Ovary (tissue), 10 donors: ENCODE measurements at regions of chrX and their contacts with region 1.

Region 1: GRCh38 chrX:24332878-24333277 is 19.0 kb upstream of the SUPT20HL2 start:
- DNase-seq: no peak
- H3K4me3 ChIP-seq: no peak overlapping the region
- H3K27ac ChIP-seq: no peak overlapping the region
- H3K4me1 ChIP-seq: no peaks in the 10 kb centered on the region
- H3K27me3 ChIP-seq: no peaks in the 10 kb centered on the region
- CTCF ChIP-seq: no peak
- EP300 ChIP-seq: no peak
- POLR2A ChIP-seq: no peak

Region 2: DNA sequence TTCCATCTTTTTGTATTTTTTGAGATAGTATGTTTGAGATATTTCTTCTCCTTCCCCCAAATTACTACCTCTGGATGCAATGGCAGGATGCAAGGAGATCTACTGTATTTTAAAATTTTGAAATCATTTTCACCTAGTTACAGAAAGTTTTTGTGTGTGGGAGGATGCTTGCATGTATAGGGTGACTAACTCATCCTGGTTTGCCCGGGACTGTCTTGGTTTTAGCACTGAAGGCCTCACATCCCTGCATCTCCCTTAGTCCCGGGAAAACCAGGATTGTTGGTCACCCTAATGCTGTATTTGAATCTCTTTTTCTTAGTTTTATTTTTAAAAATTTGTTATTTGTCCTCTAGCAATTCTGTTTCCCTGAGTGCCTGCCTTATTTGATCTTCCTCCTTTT is 31.1 kb before region 1 on chrX:
- intact Hi-C with region 1: loop called in 1 of 4 experiments (anchors 1 kb)
- DNase-seq: no peak
- H3K4me3 ChIP-seq: no peak overlapping the region
- H3K27ac ChIP-seq: no peak overlapping the region
- H3K4me1 ChIP-seq: no peaks in the 10 kb centered on the region
- H3K27me3 ChIP-seq: no peaks in the 10 kb centered on the region
- CTCF ChIP-seq: no peak
- EP300 ChIP-seq: no peak
- POLR2A ChIP-seq: no peak

Region 3: DNA sequence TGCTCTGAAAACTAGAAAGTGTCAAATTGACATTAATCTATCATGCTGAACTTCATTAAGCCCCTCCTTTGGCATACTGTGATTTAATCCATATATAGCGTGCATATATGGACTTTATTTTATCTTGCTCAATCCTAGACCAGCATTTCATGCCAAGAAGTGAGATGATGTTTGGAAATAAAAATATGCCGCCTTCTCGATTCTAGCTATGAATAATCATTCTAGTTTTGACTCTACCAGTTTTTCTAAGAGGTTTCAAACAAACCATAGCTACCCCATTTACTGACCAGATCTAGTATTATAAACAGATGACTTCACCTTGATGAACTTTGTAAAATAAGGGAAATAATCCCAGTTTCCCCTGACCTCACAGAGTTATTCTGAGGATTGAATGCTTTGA is 587.9 kb after region 1 on chrX:
- intact Hi-C with region 1: no loop called
- DNase-seq: no peak
- H3K4me3 ChIP-seq: no peak overlapping the region
- H3K27ac ChIP-seq: no peak overlapping the region
- H3K4me1 ChIP-seq: no peaks in the 10 kb centered on the region
- H3K27me3 ChIP-seq: no peaks in the 10 kb centered on the region
- CTCF ChIP-seq: no peak
- EP300 ChIP-seq: no peak
- POLR2A ChIP-seq: no peak